Posterior vena cava (tissue), 2 donors: ENCODE measurements at regions of chr4 and their contacts with region 1.

Region 1: GRCh38 chr4:26860157-26860921 is at the start of gene STIM2:
- DNase-seq: peak; percentile 99
- total RNA-seq, gene STIM2: 17.0 to 17.4 TPM

Region 2: DNA sequence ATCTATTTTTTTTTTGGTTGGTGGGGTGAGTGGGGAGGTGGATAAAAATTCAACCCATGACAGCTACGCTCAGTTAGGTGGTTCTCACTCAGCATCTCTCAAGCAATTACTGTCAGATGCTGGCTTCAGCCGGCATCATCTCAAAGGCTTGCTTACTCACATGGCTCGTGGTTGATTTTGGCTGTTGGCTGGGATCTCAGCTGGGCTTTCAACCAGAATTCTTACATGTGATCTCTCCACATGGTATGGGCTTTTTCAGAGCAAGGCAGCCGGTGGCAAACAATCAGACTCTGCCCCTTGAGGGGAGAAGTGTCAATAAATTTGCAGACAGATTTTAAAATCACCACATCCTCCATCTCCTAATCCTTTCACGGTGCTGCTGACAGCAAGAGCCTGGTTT is 1157.5 kb before region 1 on chr4:
- intact Hi-C with region 1: no loop called
- DNase-seq: no peak

Region 3: GRCh38 chr4:26141911-26142638 is 718.3 kb before region 1 on chr4:
- intact Hi-C with region 1: no loop called
- DNase-seq: no peak

Region 4: GRCh38 chr4:26171941-26172340 is 688.4 kb before region 1 on chr4:
- intact Hi-C with region 1: no loop called
- DNase-seq: no peak

Region 5: DNA sequence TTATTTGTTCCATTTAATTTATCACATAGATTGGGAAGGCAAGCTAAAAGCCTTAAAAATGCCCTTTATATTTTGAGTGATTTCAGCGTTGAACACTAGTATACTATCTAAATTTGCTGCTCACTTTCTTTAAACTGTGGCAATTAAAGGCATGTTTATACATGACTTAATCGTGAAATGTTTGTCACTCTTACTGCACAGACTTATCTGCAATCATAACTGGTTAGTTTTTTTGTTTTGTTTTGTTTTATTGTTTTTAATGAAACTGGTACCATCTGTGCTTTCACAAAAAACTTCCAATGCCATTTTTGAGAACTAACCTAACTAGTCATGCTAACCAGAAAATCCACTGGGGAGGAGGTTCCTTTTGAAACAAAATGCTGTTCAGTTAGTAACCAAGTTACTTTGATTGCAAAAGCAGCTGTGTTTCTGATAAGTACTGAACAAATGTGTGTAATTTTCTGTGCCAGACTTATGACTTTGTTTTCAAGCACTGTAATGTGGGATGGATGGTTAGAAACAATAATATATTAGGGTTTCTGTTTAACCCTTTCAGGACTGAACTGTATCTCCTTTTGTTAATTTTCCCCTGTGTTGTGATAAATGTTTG is 426.2 kb before region 1 on chr4:
- intact Hi-C with region 1: loop called in 1 of 2 experiments (anchors 10 kb)
- DNase-seq: no peak

Region 6: DNA sequence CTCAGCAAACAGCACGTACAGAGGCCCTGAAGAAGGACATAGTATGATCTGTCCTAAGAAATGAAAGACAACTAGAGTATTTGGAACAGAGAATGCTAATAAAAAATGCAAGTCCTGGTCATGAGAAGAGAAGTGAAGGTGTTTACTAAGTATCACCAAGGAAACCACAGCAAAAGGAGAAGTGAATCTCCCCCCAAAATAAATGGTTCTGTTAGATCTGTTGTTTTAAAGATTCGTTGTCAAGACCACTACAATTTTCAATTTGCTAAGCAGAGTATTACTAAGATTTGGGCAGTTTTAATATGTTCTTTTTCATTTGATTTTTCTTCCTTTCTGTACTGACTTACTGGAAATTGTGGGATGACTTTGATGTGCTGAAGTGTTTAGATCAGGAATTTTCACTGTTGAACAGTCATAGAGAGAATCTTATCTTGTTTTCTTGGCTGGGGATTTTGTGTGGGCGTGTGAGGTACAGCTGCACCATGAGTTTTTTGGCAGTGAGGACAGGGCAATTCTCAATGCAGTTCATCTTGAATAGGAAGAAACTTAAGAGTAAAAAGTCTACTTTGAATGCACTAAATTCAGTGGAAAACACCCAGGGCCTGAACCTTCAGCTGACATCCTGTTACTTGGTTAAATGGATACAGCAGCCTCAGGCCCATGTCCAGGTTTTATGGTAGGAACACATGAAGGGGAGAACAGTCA is 132.5 kb after region 1 on chr4:
- intact Hi-C with region 1: loop called in 1 of 2 experiments (anchors 10 kb)
- DNase-seq: no peak